BJ (cell line): ENCODE measurements at regions of chr19 and their contacts with region 1.

Region 1: DNA sequence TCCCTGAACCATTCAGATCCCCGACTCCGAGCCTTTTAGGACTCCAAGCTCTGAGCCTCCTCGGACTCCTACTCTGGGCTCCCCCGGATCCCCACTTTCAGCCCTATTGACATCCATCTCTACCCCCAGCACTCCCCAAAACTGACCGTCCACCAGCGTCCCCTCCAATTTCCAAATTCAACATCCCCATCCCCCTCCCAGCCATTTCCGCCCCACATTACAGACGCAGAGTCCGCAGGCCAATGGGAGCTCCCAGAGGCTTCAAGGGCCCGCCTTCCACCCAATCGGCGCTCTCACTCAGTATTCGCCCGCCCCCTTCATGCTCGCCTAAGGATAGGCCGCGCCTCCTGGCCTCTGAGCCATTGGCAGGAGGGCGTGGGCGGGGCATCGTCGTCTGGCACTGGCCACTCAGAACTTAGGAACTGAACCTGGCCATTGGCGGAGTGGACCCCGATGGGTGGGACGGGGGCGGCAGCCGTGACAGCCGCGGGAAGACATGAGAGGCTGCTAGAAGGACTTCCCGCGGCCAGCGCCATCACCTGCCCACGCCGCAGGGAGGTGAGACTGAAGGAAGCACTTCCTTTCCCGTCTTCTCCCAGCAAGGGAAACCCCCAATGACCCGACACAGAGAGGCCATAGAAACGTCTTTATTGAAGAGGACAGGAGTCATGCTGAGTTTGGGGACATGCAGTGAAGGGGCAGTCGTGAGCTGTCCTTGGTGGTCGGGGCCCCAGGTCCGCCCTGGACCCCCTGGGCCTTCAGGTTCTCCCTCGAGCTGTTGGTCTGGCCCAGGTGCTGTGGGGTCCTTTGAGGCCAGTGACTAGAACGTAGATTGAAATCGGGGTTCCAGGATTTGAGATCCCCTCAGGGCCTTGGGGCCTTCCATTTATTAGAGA is at the start of gene ALKBH6:
- DNase-seq: peak; percentile 95
- H3K4me3 ChIP-seq: peak within 1 kb of the TSS; percentile 91
- H3K27me3 ChIP-seq: no peaks in the 10 kb centered on the region
- CTCF ChIP-seq: no peak
- polyA plus RNA-seq, gene ALKBH6: 17.5 and 19.5 TPM in 2 replicates

Region 2: GRCh38 chr19:36041831-36042230 is 27.6 kb after region 1 on chr19:
- CTCF ChIA-PET with region 1: no interaction called
- POLR2A ChIA-PET with region 1: interaction called, 12 read pairs
- DNase-seq: peak; percentile 71
- H3K4me3 ChIP-seq: no peak overlapping the region
- H3K27me3 ChIP-seq: no peaks in the 10 kb centered on the region
- CTCF ChIP-seq: no peak